ENCODE measurements at regions of chr1 and their contacts with region 1.

Region 1: GRCh38 chr1:203290261-203291089 is 14.8 kb upstream of the BTG2 start:
- DNase-seq: peak; percentile 99
- H3K4me3 Mint-ChIP-seq: peak overlapping the region; percentile 83
- H3K27ac Mint-ChIP-seq: peak overlapping the region; percentile 99
- H3K4me1 Mint-ChIP-seq: peaks cover 82% of the 10 kb centered on the region
- H3K27me3 Mint-ChIP-seq: no peaks in the 10 kb centered on the region

Region 2: GRCh38 chr1:203273206-203273868 is 17.1 kb before region 1 on chr1:
- CTCF ChIA-PET with region 1: interaction called, 98 read pairs
- intact Hi-C with region 1: loop called (anchors 1 kb)
- DNase-seq: peak; percentile 96
- H3K4me3 Mint-ChIP-seq: peak overlapping the region; percentile 72
- H3K27ac Mint-ChIP-seq: peak overlapping the region; percentile 83
- H3K4me1 Mint-ChIP-seq: peaks cover 58% of the 10 kb centered on the region
- H3K27me3 Mint-ChIP-seq: no peaks in the 10 kb centered on the region

Region 3: GRCh38 chr1:203320591-203321272 is 30.3 kb after region 1 on chr1:
- CTCF ChIA-PET with region 1: interaction called, 35 read pairs
- intact Hi-C with region 1: loop called (anchors 1 kb)
- DNase-seq: peak; percentile 84
- H3K4me3 Mint-ChIP-seq: peak overlapping the region; percentile 40
- H3K27ac Mint-ChIP-seq: peak overlapping the region; percentile 88
- H3K4me1 Mint-ChIP-seq: peaks cover 76% of the 10 kb centered on the region
- H3K27me3 Mint-ChIP-seq: no peaks in the 10 kb centered on the region

Region 4: GRCh38 chr1:204516180-204516879 is 1225.9 kb after region 1 on chr1 and contains the start of gene MDM4:
- CTCF ChIA-PET with region 1: no interaction called
- intact Hi-C with region 1: loop called (anchors 10 kb)
- DNase-seq: peak; percentile 97
- H3K4me3 Mint-ChIP-seq: no peak within 1 kb of the TSS
- H3K27ac Mint-ChIP-seq: peak within 1 kb of the TSS; percentile 72
- H3K4me1 Mint-ChIP-seq: peaks cover 59% of the 10 kb centered on the region
- H3K27me3 Mint-ChIP-seq: no peaks in the 10 kb centered on the region
- total RNA-seq, gene MDM4: 109 TPM

Measured in activated naive CD4-positive, alpha-beta T cell treated with anti-CD3 and anti-CD28 coated beads for 36 hours (primary cell).